ENCODE measurements at regions of chr15 and their contacts with region 1.

Region 1: DNA sequence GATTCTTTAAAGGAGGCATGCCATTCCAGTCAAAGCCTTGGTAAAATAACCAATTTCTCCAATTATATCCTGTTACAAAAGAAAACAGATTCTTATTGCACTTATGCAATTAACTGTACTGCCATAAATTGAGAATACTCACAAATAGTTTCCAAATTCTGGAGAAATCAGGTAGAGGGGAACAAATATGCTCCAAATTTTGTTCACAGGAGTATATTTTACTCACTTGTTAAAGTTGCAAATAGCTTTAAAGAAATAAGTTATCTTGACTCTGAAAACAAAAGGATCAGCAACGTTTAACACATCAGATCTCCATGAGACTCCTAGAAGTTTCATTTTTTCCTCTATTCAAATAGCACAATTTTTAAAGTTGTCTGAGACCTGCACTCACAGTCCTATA is 712.1 kb upstream of the ARRDC4 start:
- DNase-seq: no peak
- ATAC-seq: no peak
- H3K4me3 ChIP-seq: no peak overlapping the region
- H3K27ac ChIP-seq: no peak overlapping the region
- H3K4me1 ChIP-seq: no peaks in the 10 kb centered on the region
- H3K27me3 ChIP-seq: no peaks in the 10 kb centered on the region
- CTCF ChIP-seq: no peak
- POLR2A ChIP-seq: no peak
- RAD21 ChIP-seq: no peak

Region 2: DNA sequence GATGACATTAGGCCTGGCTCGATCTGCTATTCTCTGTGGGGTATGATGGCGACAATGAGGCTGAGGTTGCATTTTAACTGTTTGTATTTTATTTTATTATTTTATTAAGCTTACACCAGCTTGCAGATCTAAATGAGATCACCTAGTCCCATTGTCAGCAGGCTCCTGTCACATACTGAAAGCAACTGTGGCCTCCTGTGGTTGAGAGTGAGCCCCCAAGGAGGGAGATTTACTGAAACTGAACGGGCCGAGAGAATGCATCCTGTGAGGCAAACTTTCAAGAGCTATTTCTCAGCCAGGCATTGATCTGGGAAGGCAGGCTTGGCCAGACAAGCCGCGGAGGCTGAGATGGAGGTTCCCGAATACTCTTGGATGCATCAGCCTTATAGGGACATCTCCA is 501.7 kb after region 1 on chr15:
- CTCF ChIA-PET with region 1: interaction called, 7 read pairs
- POLR2A ChIA-PET with region 1: no interaction called
- RAD21 ChIA-PET with region 1: no interaction called
- intact Hi-C with region 1: loop called (anchors 5 kb)
- DNase-seq: no peak
- ATAC-seq: no peak
- H3K4me3 ChIP-seq: no peak overlapping the region
- H3K27ac ChIP-seq: no peak overlapping the region
- H3K4me1 ChIP-seq: no peaks in the 10 kb centered on the region
- H3K27me3 ChIP-seq: no peaks in the 10 kb centered on the region
- CTCF ChIP-seq: no peak
- POLR2A ChIP-seq: no peak
- RAD21 ChIP-seq: no peak